H1 (cell line): ENCODE measurements at regions of chr1 and their contacts with region 1.

Region 1: GRCh38 chr1:201348211-201348566 is 29.3 kb downstream of the TNNT2 start:
- DNase-seq: peak; percentile 34 to 86
- H3K4me3 ChIP-seq: peak overlapping the region in 1 of 4 experiments; percentile 37; a peak in 2 of 8 replicates
- H3K27ac ChIP-seq: no peak overlapping the region
- H3K4me1 ChIP-seq: peaks cover 8 to 25% (median 12%) of the 10 kb centered on the region in 4 experiments
- H3K27me3 ChIP-seq: 0 out of 7 replicates have a peak, but pooled peaks cover 0 to 3% (median 0%) of the 10 kb centered on the region in 4 experiments
- CTCF ChIP-seq: peak; percentile 82 to 86 (median 85)
- EP300 ChIP-seq: no peak
- POLR2A ChIP-seq: no peak
- RAD21 ChIP-seq: peak; percentile 77 to 82

Region 2: GRCh38 chr1:200992382-200993048 is 355.7 kb before region 1 on chr1:
- CTCF ChIA-PET with region 1: no interaction called
- POLR2A ChIA-PET with region 1: no interaction called
- DNase-seq: no peak
- H3K4me3 ChIP-seq: no peak overlapping the region
- H3K27ac ChIP-seq: no peak overlapping the region
- H3K4me1 ChIP-seq: no peaks in the 10 kb centered on the region
- H3K27me3 ChIP-seq: no peaks in the 10 kb centered on the region
- CTCF ChIP-seq: no peak
- EP300 ChIP-seq: no peak
- POLR2A ChIP-seq: no peak
- RAD21 ChIP-seq: no peak

Region 3: GRCh38 chr1:201254625-201255506 is 93.3 kb before region 1 on chr1:
- CTCF ChIA-PET with region 1: interaction called, 127 read pairs
- POLR2A ChIA-PET with region 1: interaction called, 6 read pairs
- DNase-seq: peak; percentile 34 to 100
- H3K4me3 ChIP-seq: no peak overlapping the region
- H3K27ac ChIP-seq: no peak overlapping the region
- H3K4me1 ChIP-seq: peaks cover 0 to 6% (median 5%) of the 10 kb centered on the region in 4 experiments; a peak in 5 of 7 replicates
- H3K27me3 ChIP-seq: no peaks in the 10 kb centered on the region; a peak in 2 of 7 replicates
- CTCF ChIP-seq: peak; percentile 97 to 98 (median 97)
- EP300 ChIP-seq: no peak
- POLR2A ChIP-seq: no peak
- RAD21 ChIP-seq: peak; percentile 98 to 99

Region 4: DNA sequence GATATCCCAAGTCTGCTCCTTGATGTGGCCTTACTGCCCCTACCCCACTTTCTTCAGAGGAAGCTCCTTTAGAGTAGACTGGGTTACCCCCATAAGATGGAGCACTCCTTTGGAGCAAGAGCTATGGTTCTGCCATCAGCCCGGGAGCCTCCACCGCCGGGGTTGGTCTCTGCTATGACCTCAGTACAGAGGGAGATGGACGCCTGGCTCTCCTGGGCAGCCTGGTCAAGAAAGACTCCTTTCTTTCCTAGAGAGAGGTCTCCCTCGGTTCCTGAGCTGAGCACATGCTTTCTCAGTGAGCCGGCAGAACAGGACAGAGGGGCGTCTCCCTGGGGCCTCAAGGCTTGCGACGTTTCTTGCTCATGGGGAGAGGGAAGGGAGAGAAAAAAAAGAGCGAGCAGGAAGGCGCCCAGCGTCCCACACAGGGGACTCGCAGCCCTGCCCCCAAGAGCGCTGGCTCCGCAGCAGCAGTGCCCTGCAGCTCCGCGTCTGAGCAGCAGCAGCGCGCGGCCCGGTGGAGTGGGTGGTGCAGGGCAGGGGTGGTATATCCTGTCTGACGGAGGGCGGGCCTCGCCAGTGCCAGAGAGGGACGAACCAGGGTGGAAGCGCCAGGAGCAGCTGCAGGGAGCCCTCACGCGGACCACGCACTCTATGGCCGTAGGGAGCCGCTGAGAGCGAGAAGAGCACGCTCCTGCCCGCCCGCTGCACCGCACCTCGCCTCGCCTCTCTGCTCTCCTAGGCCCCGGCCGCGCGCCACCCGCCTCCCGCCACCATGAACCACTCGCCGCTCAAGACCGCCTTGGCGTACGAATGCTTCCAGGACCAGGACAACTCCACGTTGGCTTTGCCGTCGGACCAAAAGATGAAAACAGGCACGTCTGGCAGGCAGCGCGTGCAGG is 65.0 kb before region 1 on chr1 and contains the start of gene PKP1:
- CTCF ChIA-PET with region 1: interaction called, 27 read pairs
- POLR2A ChIA-PET with region 1: interaction called, 4 read pairs
- DNase-seq: peak in 1 of 2 experiments; percentile 79
- H3K4me3 ChIP-seq: peak within 1 kb of the TSS in 3 of 4 experiments; percentile 3 to 41 (median 16); a peak in 3 of 8 replicates
- H3K27ac ChIP-seq: no peak within 1 kb of the TSS
- H3K4me1 ChIP-seq: peaks cover 0 to 9% (median 9%) of the 10 kb centered on the region in 4 experiments; a peak in 5 of 7 replicates
- H3K27me3 ChIP-seq: peaks cover 15 to 31% (median 30%) of the 10 kb centered on the region in 4 experiments
- CTCF ChIP-seq: no peak
- EP300 ChIP-seq: no peak
- POLR2A ChIP-seq: no peak
- RAD21 ChIP-seq: no peak
- total RNA-seq, gene PKP1: 0.88 and 0.95 TPM in 2 replicates

Region 5: DNA sequence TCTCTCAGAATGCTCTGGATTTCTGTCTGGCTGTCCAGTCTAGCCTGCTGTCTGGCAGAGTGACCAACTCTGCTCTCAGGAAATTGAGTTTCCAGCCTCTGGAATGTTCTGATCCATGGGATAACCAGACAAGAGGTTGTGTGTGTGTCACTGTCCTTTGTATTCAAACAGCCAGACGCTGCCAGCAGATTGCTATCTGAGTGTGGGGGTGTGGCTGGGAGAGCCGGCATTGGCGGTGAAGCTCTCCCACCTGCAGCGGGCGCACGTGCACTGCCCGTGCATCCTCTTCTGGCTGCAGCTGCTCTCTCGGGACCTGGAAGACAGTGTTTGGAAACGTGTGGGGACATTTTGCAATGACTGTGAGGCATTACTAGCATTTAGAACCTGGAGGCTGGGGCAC is 38.8 kb before region 1 on chr1:
- CTCF ChIA-PET with region 1: interaction called, 95 read pairs
- POLR2A ChIA-PET with region 1: interaction called, 4 read pairs
- DNase-seq: peak; percentile 34 to 69
- H3K4me3 ChIP-seq: no peak overlapping the region
- H3K27ac ChIP-seq: no peak overlapping the region
- H3K4me1 ChIP-seq: peaks cover 0 to 3% (median 0%) of the 10 kb centered on the region in 4 experiments; a peak in 1 of 7 replicates
- H3K27me3 ChIP-seq: peaks cover 0 to 10% (median 6%) of the 10 kb centered on the region in 4 experiments; a peak in 4 of 7 replicates
- CTCF ChIP-seq: peak; percentile 57 to 70 (median 68)
- EP300 ChIP-seq: no peak
- POLR2A ChIP-seq: no peak
- RAD21 ChIP-seq: peak; percentile 75 to 77

Region 6: GRCh38 chr1:201334325-201335173 is 13.6 kb before region 1 on chr1:
- CTCF ChIA-PET with region 1: interaction called, 47 read pairs
- POLR2A ChIA-PET with region 1: interaction called, 4 read pairs
- DNase-seq: no peak
- H3K4me3 ChIP-seq: no peak overlapping the region
- H3K27ac ChIP-seq: no peak overlapping the region
- H3K4me1 ChIP-seq: no peaks in the 10 kb centered on the region
- H3K27me3 ChIP-seq: no peaks in the 10 kb centered on the region; a peak in 1 of 7 replicates
- CTCF ChIP-seq: no peak
- EP300 ChIP-seq: no peak
- POLR2A ChIP-seq: no peak
- RAD21 ChIP-seq: no peak

Region 7: GRCh38 chr1:201385299-201385891 is 37.2 kb after region 1 on chr1:
- CTCF ChIA-PET with region 1: interaction called, 33 read pairs
- POLR2A ChIA-PET with region 1: no interaction called
- DNase-seq: peak; percentile 38 to 95
- H3K4me3 ChIP-seq: no peak overlapping the region
- H3K27ac ChIP-seq: no peak overlapping the region
- H3K4me1 ChIP-seq: peaks cover 0 to 2% (median 0%) of the 10 kb centered on the region in 4 experiments; a peak in 1 of 7 replicates
- H3K27me3 ChIP-seq: no peaks in the 10 kb centered on the region
- CTCF ChIP-seq: peak; percentile 92 to 99 (median 98)
- EP300 ChIP-seq: no peak
- POLR2A ChIP-seq: no peak
- RAD21 ChIP-seq: peak; percentile 74 to 84

Region 8: DNA sequence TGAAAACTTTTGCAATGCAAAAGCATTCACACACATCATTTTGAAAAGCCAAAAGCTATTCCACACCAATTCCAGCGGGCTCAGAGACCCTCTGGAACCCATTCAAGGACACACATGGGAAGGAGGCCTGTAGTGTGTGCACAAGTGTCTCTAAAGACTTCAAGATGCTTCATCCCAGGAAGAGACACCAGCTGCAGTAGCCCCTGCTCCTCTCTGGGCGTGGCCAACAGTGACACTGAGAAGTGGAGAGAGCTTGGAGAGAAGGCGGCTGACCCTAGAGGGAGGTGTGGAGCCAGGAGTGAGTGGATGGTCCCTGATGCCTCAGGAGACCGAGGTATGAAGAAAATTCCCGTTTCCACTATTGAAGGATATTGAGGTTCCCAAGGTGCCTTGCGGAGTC is 88.2 kb after region 1 on chr1:
- CTCF ChIA-PET with region 1: interaction called, 17 read pairs
- POLR2A ChIA-PET with region 1: no interaction called
- DNase-seq: peak in 1 of 2 experiments; percentile 63
- H3K4me3 ChIP-seq: no peak overlapping the region
- H3K27ac ChIP-seq: no peak overlapping the region
- H3K4me1 ChIP-seq: peaks cover 0 to 7% (median 3%) of the 10 kb centered on the region in 4 experiments; a peak in 3 of 7 replicates
- H3K27me3 ChIP-seq: no peaks in the 10 kb centered on the region
- CTCF ChIP-seq: peak; percentile 39 to 55 (median 49); a peak in 3 of 4 replicates
- EP300 ChIP-seq: no peak
- POLR2A ChIP-seq: no peak
- RAD21 ChIP-seq: peak; percentile 29 to 54